ENCODE measurements at regions of chr2 and their contacts with region 1.

Region 1: DNA sequence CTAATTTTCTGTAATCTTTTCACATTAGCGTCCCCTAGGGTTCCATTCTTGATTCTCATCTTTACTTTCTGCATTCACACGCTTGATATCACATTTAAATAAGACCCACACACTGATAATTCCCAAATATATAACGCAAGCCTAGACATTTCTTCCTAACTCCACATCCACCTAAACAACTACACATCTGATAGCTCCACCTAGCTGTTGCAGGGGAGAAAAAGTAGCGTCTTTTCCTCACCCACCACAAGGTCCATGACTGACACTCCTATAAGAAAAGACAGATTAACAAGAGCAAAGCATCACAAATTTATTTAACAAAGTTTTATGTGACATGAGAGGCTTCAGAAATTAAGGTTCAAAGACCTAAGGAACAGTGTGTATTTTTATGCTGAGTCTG is 862.2 kb upstream of the DDX18 start:
- DNase-seq: peak; percentile 36
- H3K4me3 Mint-ChIP-seq: no peak overlapping the region
- H3K27ac Mint-ChIP-seq: no peak overlapping the region
- H3K4me1 Mint-ChIP-seq: peaks cover 6% of the 10 kb centered on the region
- H3K27me3 Mint-ChIP-seq: no peaks in the 10 kb centered on the region
- CTCF ChIP-seq: peak; percentile 27

Region 2: GRCh38 chr2:116696223-116696622 is 256.0 kb before region 1 on chr2:
- CTCF ChIA-PET with region 1: interaction called, 3 read pairs
- POLR2A ChIA-PET with region 1: no interaction called
- intact Hi-C with region 1: loop called (anchors 5 kb)
- DNase-seq: peak; percentile 33
- H3K4me3 Mint-ChIP-seq: no peak overlapping the region
- H3K27ac Mint-ChIP-seq: no peak overlapping the region
- H3K4me1 Mint-ChIP-seq: peaks cover 8% of the 10 kb centered on the region
- H3K27me3 Mint-ChIP-seq: no peaks in the 10 kb centered on the region
- CTCF ChIP-seq: peak; percentile 23